Activated CD4-positive, alpha-beta memory T cell treated with anti-CD3 and anti-CD28 coated beads, Interleukin-2, amount 10 ng/mL, durations not matched to agents 7 days and 5 days (primary cell): ENCODE measurements at regions of chr4 and their contacts with region 1.

Region 1: GRCh38 chr4:55395529-55396307 is at the start of gene TMEM165:
- DNase-seq: peak; percentile 93
- H3K4me3 Mint-ChIP-seq: peak within 1 kb of the TSS; percentile 90
- H3K27ac Mint-ChIP-seq: peak within 1 kb of the TSS; percentile 90
- H3K4me1 Mint-ChIP-seq: peaks cover 44% of the 10 kb centered on the region
- H3K27me3 Mint-ChIP-seq: no peaks in the 10 kb centered on the region
- total RNA-seq, gene TMEM165: 68.2 to 70.1 TPM

Region 2: GRCh38 chr4:55546756-55547465 is 151.2 kb after region 1 on chr4 and contains the start of gene CLOCK:
- CTCF ChIA-PET with region 1: interaction called, 4 read pairs
- POLR2A ChIA-PET with region 1: interaction called, 13 read pairs
- DNase-seq: peak; percentile 83
- H3K4me3 Mint-ChIP-seq: peak within 1 kb of the TSS; percentile 85
- H3K27ac Mint-ChIP-seq: peak within 1 kb of the TSS; percentile 79
- H3K4me1 Mint-ChIP-seq: peaks cover 50% of the 10 kb centered on the region
- H3K27me3 Mint-ChIP-seq: peaks cover 27% of the 10 kb centered on the region
- total RNA-seq, gene CLOCK: 7.4 to 9.6 TPM

Region 3: GRCh38 chr4:55604996-55605395 is 209.3 kb after region 1 on chr4:
- CTCF ChIA-PET with region 1: no interaction called
- POLR2A ChIA-PET with region 1: no interaction called
- DNase-seq: no peak
- H3K4me3 Mint-ChIP-seq: no peak overlapping the region
- H3K27ac Mint-ChIP-seq: no peak overlapping the region
- H3K4me1 Mint-ChIP-seq: peaks cover 8% of the 10 kb centered on the region
- H3K27me3 Mint-ChIP-seq: peaks cover 8% of the 10 kb centered on the region

Region 4: DNA sequence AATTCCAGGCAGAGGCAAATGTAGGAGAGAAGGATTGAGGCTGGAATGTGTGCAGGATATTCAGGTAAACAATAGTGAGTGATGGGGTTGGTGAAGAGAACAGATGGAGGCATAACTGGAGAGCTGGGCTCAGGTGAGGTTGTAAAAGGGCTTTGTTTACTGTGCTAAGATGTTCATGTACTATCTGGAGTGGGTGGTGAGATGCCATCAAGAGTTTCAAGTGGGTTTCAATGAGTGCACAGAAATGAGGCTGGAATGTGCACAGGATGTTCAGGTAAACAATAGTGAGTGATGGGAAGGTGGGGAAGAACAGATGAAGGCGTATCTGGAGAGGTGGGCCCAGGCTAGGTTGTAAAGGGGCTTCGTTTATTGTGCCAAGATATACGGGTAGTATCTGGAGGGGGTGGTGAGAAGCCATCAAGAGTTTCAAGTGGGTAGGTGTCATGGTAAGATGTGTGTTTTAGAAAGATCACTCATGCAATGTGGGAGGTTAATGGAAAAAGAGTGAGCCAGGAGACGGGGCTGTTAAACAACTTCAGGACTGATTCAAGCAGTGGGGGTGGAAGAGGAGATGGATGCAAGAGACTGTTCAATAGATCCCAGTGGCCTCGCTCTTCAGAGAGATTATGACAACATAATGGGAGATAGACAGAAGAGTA is 265.8 kb after region 1 on chr4:
- CTCF ChIA-PET with region 1: no interaction called
- POLR2A ChIA-PET with region 1: no interaction called
- DNase-seq: no peak
- H3K4me3 Mint-ChIP-seq: no peak overlapping the region
- H3K27ac Mint-ChIP-seq: no peak overlapping the region
- H3K4me1 Mint-ChIP-seq: no peaks in the 10 kb centered on the region
- H3K27me3 Mint-ChIP-seq: no peaks in the 10 kb centered on the region

Region 5: GRCh38 chr4:55948726-55949474 is 553.2 kb after region 1 on chr4 and contains the start of gene CEP135:
- CTCF ChIA-PET with region 1: interaction called, 4 read pairs
- POLR2A ChIA-PET with region 1: interaction called, 11 read pairs
- DNase-seq: peak; percentile 95
- H3K4me3 Mint-ChIP-seq: peak within 1 kb of the TSS; percentile 78
- H3K27ac Mint-ChIP-seq: peak within 1 kb of the TSS; percentile 94
- H3K4me1 Mint-ChIP-seq: peaks cover 46% of the 10 kb centered on the region
- H3K27me3 Mint-ChIP-seq: no peaks in the 10 kb centered on the region
- total RNA-seq, gene CEP135: 18.0 to 18.8 TPM